SK-N-SH (cell line): ENCODE measurements at regions of chr17 and their contacts with region 1.

Region 1: DNA sequence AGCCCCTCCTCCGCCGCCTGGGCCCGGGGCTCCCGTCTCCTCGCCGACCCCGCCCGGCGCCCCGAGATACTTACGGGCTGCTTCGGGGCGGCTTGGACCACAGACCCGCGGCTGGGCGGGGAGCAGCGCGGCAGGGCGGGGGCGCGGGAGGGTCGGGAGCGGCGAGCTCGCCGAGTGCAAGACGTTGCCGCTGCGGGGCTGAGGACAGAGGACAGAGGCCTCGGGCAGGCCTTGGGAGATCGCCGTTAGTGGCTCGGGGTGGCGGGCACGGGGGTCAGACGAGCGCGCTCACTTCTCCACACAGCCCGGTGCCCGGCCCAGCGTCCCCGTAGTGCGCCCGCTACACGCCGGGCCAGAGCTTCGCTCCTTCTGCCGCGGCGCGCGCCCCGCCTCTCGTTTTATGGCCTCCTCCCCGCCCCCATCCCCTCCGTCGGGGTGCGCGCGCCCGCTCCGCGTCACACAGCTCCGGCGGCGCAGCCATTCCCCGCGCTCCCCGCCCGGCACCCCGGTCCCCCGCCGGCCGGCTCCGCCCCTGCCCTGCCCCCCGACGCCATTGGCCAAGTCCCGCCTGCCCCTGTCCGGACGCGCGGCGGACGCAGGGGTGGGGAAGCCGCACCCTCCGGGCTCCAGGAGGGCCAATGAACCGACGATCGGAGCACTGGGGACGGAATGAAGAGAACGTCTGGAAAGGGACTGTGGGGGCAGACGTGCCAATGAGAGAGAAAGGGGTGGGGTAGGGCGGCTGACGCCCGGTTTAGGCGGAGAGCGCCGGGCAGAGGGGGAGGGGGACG is at the start of gene TOB1:
- DNase-seq: peak; percentile 99
- H3K4me3 ChIP-seq: peak within 1 kb of the TSS; percentile 79 to 90
- H3K27ac ChIP-seq: peak within 1 kb of the TSS; percentile 97 to 100
- H3K4me1 ChIP-seq: peaks cover 7 to 30% of the 10 kb centered on the region in 2 experiments; a peak in 2 of 4 replicates
- H3K27me3 ChIP-seq: no peaks in the 10 kb centered on the region
- CTCF ChIP-seq: no peak
- EP300 ChIP-seq: 0 out of 4 replicates have a peak, but pooled peaks of 1 of the 2 experiments have one; percentile 12
- RAD21 ChIP-seq: no peak; the same call in 1 of the 2 replicates
- polyA plus RNA-seq, gene TOB1: 19.3 and 21.8 TPM in 2 replicates

Region 2: DNA sequence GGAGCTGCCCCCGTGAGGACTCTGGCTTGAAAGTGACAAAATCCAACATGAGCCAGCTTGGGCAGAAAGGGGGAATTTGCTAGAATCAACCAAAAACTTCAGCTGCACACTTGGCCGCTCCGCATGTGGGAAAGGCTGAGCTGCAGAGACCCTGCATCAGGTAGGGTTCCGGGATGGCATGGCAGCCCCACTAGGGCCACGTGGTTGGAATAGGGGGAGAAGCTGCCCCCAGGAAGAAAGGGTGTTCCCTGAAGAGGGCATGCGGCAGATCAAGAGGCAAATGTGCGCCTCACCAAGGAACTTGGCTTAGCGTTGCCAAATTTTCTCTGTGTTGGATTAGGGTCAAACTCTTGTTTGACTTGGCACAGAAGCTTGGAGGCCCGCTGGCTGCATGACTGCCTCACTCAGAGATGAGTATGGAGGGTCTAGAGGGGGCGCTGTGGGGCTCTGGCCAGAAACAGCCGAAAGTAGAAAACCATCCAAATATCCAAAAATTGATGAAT is 60.0 kb before region 1 on chr17:
- CTCF ChIA-PET with region 1: no interaction called
- POLR2A ChIA-PET with region 1: no interaction called
- DNase-seq: no peak
- H3K4me3 ChIP-seq: no peak overlapping the region
- H3K27ac ChIP-seq: no peak overlapping the region
- H3K4me1 ChIP-seq: no peaks in the 10 kb centered on the region
- H3K27me3 ChIP-seq: no peaks in the 10 kb centered on the region
- CTCF ChIP-seq: peak; percentile 48
- EP300 ChIP-seq: no peak
- RAD21 ChIP-seq: no peak

Region 3: GRCh38 chr17:50899559-50900319 is 33.6 kb after region 1 on chr17:
- CTCF ChIA-PET with region 1: interaction called, 62 read pairs
- POLR2A ChIA-PET with region 1: interaction called, 106 read pairs
- DNase-seq: no peak
- H3K4me3 ChIP-seq: no peak overlapping the region
- H3K27ac ChIP-seq: no peak overlapping the region
- H3K4me1 ChIP-seq: peaks cover 9 to 23% of the 10 kb centered on the region in 2 experiments
- H3K27me3 ChIP-seq: no peaks in the 10 kb centered on the region
- CTCF ChIP-seq: no peak
- EP300 ChIP-seq: no peak
- RAD21 ChIP-seq: no peak

Region 4: GRCh38 chr17:50919321-50920085 is 53.3 kb after region 1 on chr17:
- CTCF ChIA-PET with region 1: interaction called, 10 read pairs
- POLR2A ChIA-PET with region 1: interaction called, 166 read pairs
- DNase-seq: peak; percentile 99
- H3K4me3 ChIP-seq: no peak overlapping the region
- H3K27ac ChIP-seq: peak overlapping the region; percentile 80 to 96
- H3K4me1 ChIP-seq: peaks cover 28 to 39% of the 10 kb centered on the region in 2 experiments
- H3K27me3 ChIP-seq: no peaks in the 10 kb centered on the region
- CTCF ChIP-seq: no peak
- EP300 ChIP-seq: peak in 1 of 2 experiments; percentile 68; a peak in 1 of 4 replicates
- RAD21 ChIP-seq: peak; percentile 43; the same call in 1 of the 2 replicates

Region 5: DNA sequence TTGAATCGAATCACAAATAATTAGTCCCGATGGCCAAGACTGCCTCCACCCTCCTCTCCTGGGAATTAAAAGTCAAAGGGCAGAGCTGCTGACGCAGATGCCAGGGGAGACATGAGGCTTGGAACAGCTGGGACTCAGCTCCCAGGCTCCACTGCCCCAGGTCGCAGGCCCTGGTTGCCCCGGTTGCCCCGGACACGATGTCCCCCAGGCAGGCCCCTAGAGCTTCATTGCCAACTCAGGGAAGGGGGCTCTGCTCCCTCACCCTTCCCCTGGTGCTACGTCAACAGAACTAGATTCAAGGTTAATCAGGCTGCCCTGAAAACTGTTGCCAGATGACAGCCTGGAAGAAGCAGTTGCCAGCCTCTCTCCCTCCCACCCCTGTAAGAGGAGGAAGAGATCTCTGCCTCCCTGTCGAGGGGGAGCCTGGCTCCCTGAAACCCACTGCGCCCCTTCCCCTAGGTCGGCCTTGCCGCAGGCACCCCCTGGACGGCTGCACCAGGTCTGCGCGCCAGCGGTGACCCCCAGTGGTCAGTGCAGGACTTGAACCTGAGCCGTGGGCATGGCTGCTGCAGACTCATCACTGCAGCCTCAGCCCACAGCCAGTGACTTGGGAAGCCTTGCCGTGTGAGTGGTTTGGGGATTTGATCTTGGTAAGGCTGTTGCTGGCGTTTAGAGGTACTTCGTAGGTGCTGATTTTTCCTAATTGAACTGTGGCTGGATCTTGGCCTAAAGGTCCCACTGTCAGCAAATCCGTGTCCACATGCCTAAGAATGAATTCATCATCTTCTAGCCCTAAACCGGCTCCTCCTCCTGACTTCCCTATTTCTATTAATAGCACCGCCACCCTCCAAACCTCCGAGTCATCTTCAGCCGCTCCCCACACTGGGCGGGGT is 84.1 kb after region 1 on chr17:
- CTCF ChIA-PET with region 1: interaction called, 820 read pairs
- POLR2A ChIA-PET with region 1: interaction called, 609 read pairs
- DNase-seq: peak; percentile 86
- H3K4me3 ChIP-seq: peak overlapping the region in 1 of 2 experiments; percentile 15; a peak in 1 of 4 replicates
- H3K27ac ChIP-seq: peak overlapping the region; percentile 81 to 82
- H3K4me1 ChIP-seq: peaks cover 43 to 81% of the 10 kb centered on the region in 2 experiments
- H3K27me3 ChIP-seq: no peaks in the 10 kb centered on the region
- CTCF ChIP-seq: peak; percentile 95
- EP300 ChIP-seq: peak in 1 of 2 experiments; percentile 33; a peak in 1 of 4 replicates
- RAD21 ChIP-seq: peak; percentile 95

Region 6: GRCh38 chr17:51046514-51047384 is 180.6 kb after region 1 on chr17:
- CTCF ChIA-PET with region 1: interaction called, 10 read pairs
- POLR2A ChIA-PET with region 1: interaction called, 38 read pairs
- DNase-seq: peak; percentile 84
- H3K4me3 ChIP-seq: peak overlapping the region; percentile 56 to 60
- H3K27ac ChIP-seq: peak overlapping the region; percentile 71 to 94
- H3K4me1 ChIP-seq: peaks cover 26 to 32% of the 10 kb centered on the region in 2 experiments
- H3K27me3 ChIP-seq: no peaks in the 10 kb centered on the region
- CTCF ChIP-seq: no peak; the same call in 1 of the 2 replicates
- EP300 ChIP-seq: peak in 1 of 2 experiments; percentile 57; a peak in 2 of 4 replicates
- RAD21 ChIP-seq: no peak

Region 7: DNA sequence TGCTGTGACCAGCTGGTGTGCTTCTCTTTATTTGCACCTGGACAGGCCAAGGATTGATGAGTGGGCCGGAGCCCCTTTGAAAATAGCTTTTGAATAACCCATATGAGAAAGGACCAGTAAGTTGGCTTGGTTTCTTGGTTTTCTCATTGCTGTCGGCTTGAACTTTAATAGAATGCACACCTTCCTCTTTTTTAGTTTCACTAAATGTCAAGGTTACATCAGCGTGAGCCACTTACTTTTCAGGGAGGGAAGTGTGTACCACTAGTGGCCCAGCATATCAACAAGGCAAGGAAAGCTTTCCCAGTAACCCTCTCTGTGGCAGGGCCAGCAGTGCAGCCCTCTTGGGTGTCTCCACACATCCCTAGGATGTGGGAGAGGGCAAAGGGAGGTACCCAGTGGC is 859.0 kb after region 1 on chr17:
- CTCF ChIA-PET with region 1: no interaction called
- POLR2A ChIA-PET with region 1: no interaction called
- DNase-seq: no peak
- H3K4me3 ChIP-seq: no peak overlapping the region
- H3K27ac ChIP-seq: no peak overlapping the region
- H3K4me1 ChIP-seq: peaks cover 0 to 3% of the 10 kb centered on the region in 2 experiments; a peak in 1 of 4 replicates
- H3K27me3 ChIP-seq: no peaks in the 10 kb centered on the region
- CTCF ChIP-seq: no peak
- EP300 ChIP-seq: no peak
- RAD21 ChIP-seq: no peak